ENCODE measurements at regions of chr10 and their contacts with region 1.

Region 1: GRCh38 chr10:11318826-11319599 is 292.4 kb downstream of the USP6NL start:
- DNase-seq: no peak
- H3K4me3 ChIP-seq: no peak overlapping the region
- H3K27ac ChIP-seq: no peak overlapping the region
- H3K4me1 ChIP-seq: no peaks in the 10 kb centered on the region
- H3K27me3 ChIP-seq: peaks cover 24% of the 10 kb centered on the region
- CTCF ChIP-seq: no peak

Region 2: DNA sequence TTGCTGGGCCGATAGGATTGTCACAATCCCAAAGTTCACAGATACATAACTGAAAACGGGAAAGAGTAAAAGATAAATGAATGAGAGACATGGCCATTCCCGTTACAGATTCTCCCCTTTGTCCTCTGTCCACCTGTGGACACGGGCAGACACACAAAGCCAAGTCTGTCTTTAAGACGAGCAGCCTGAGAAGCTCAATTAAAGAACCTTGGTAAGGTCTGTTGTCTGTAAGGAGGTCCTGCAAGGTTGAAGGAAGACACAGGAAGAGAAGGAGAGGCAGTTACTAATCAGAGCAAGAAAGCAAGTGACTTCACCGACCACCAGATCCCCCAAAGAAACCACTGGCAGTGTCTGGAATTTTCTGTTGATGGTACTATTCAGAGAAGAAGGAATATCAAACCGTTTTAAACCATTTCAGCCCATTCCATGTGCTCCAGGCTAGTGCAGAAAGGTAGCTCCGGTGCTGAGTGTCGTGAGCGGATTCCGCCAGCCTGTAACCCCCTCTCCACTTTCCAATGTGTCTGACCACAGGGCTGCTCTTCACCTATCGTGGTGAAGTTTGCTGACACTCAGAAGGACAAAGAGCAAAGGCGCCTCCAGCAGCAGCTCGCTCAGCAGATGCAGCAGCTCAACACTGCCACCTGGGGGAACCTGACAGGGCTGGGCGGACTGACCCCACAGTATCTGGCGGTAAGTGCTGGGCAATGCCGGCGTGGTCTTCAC is 48.7 kb before region 1 on chr10:
- CTCF ChIA-PET with region 1: no interaction called
- POLR2A ChIA-PET with region 1: no interaction called
- intact Hi-C with region 1: no loop called
- DNase-seq: peak; percentile 69
- H3K4me3 ChIP-seq: no peak overlapping the region
- H3K27ac ChIP-seq: no peak overlapping the region
- H3K4me1 ChIP-seq: no peaks in the 10 kb centered on the region
- H3K27me3 ChIP-seq: peaks cover 56% of the 10 kb centered on the region
- CTCF ChIP-seq: peak; percentile 95

Region 3: DNA sequence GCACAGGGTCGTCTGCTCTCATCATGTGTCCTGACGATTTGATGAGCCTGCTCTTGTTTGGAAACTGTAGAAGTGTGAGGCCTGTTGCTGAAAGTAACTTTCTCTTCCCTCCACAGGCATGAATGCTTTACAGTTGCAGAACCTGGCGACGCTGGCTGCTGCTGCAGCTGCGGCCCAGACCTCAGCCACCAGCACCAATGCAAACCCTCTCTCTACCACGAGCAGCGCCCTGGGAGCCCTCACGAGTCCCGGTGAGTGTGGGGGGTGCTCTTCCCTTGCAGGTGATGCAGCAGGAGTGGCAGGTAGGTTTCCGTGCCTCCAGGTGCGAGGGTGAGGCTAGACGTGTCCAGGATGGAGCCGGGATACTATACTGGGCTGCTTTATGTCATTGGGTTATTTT is 30.7 kb before region 1 on chr10:
- CTCF ChIA-PET with region 1: no interaction called
- POLR2A ChIA-PET with region 1: no interaction called
- intact Hi-C with region 1: loop called (anchors 1 kb)
- DNase-seq: no peak
- H3K4me3 ChIP-seq: no peak overlapping the region
- H3K27ac ChIP-seq: no peak overlapping the region
- H3K4me1 ChIP-seq: no peaks in the 10 kb centered on the region
- H3K27me3 ChIP-seq: peaks cover 12% of the 10 kb centered on the region
- CTCF ChIP-seq: no peak

Region 4: DNA sequence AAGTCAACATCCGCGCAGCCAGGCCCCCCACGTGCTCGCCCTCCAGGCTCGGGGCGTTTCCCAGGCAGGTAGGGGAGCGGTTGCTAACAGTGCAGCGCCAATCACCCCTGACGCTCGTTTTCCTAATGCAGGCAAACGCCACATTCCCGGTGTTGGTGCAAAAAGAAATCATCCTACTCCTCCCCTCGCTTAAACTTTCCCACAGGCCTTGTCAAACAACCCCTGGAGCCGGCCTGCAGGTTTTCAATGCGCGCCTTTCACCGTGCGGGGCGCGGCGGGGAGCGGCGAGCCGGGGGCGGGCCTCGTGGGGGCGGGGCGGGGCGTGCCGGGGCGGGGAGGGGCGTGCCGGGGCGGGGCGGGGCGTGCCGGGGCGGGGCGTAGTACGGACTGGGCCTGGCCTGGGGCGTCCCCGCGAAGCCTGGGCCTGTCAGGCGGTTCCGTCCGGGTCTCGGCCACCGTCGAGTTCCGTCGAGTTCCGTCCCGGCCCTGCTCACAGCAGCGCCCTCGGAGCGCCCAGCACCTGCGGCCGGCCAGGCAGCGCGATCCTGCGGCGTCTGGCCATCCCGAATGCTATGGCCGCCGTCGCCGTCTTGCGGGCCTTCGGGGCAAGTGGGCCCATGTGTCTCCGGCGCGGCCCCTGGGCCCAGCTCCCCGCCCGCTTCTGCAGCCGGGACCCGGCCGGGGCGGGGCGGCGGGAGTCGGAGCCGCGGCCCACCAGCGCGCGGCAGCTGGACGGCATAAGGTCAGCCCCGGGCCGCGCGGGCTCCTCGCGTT is 423.2 kb after region 1 on chr10 and contains the start of gene ECHDC3:
- CTCF ChIA-PET with region 1: no interaction called
- POLR2A ChIA-PET with region 1: no interaction called
- intact Hi-C with region 1: no loop called
- DNase-seq: peak; percentile 68
- H3K4me3 ChIP-seq: peak within 1 kb of the TSS; percentile 66
- H3K27ac ChIP-seq: peak within 1 kb of the TSS; percentile 72
- H3K4me1 ChIP-seq: peaks cover 5% of the 10 kb centered on the region
- H3K27me3 ChIP-seq: no peaks in the 10 kb centered on the region
- CTCF ChIP-seq: no peak
- total RNA-seq, gene ECHDC3: 8.9 and 13.9 TPM in 2 replicates